Activated CD8-positive, alpha-beta T cell treated with anti-CD3 and anti-CD28 coated beads for 36 hours (primary cell): ENCODE measurements at regions of chr5 and their contacts with region 1.

Region 1: DNA sequence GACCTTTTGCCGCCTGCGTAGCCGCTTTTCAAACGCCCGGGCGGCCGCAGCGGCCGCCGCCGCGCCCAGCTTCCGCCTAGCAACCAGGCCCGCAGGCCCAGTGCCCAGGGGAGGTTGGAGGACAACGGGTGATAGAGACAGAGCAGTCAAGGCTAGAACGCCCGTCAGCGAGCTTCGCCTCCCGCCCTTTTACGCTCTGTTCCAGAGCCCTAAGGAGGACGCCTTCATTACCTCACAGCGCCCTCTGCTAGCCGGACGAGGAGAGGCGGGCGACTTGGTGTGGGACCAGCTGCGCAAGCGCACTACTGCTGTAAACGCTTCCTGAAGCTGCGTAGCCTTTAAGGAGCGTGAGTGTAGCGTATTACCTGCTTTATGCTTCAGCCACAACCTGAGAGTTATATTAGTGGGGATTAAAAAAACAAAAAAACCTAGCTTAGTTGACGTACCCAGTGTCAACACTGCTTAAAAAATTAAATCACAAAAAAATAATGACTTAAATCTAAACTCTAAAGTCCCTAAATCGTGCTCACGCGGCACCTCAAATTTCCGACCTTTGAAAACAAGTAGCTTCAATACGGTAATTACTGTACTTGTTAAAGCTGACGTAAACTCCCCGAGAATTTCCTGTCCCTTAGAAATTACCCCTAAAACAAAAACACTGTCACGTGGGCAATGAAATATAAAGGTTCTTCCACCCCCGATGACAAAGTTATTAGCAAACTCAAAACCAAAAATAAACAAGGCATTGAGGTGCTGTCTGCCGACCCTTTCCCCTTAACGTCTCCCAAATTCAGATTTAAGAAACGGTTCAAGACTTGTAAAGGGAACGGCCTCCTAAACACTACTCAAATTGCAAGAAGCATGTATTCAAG is at the start of gene CEP120:
- DNase-seq: peak; percentile 99
- ATAC-seq: peak; percentile 96
- H3K4me3 Mint-ChIP-seq: no peak within 1 kb of the TSS
- H3K27ac Mint-ChIP-seq: no peak within 1 kb of the TSS
- H3K4me1 Mint-ChIP-seq: peaks cover 15% of the 10 kb centered on the region
- H3K27me3 Mint-ChIP-seq: no peaks in the 10 kb centered on the region
- CTCF ChIP-seq: peak; percentile 67
- total RNA-seq, gene CEP120: 22.6 to 28.3 TPM

Region 2: DNA sequence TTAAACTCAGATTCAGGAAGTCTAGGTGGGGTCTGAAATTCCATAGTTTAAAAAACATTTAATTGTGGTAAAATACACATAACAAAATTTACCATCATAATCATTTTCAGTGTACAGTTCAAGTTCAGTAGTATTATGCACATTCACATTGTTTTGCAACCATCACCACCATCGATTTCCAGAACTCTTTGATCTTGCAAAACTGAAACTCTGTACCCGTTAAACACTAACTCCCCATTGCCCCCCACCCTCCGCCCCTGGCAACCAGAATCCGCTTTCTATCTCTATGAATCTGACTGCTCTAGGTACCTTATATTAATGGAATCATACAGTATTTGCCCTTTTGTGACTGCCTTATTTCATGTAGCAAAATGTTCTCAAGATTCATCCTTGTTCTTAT is 117.8 kb before region 1 on chr5:
- CTCF ChIA-PET with region 1: no interaction called
- POLR2A ChIA-PET with region 1: no interaction called
- intact Hi-C with region 1: no loop called
- DNase-seq: no peak
- ATAC-seq: no peak
- H3K4me3 Mint-ChIP-seq: no peak overlapping the region
- H3K27ac Mint-ChIP-seq: no peak overlapping the region
- H3K4me1 Mint-ChIP-seq: no peaks in the 10 kb centered on the region
- H3K27me3 Mint-ChIP-seq: no peaks in the 10 kb centered on the region
- CTCF ChIP-seq: no peak

Region 3: DNA sequence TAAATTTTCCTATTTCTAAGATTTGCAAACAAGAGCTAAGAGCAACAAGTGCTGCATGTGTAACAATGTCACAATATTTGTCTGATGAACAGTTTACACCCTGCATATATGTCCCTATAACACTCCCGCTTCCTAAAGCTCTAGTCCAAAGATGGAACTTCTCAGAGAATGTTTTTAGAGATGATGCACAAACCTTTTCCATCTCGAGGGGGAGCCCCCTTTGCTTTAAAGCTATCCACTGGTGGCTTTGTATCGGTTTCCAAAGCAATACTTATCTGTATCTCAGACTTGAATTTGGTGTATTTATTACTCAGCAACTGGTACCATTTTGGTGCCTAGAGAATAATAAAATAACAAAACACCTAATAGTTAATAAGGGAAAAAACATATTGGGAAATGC is 11.3 kb before region 1 on chr5:
- CTCF ChIA-PET with region 1: interaction called, 11 read pairs
- POLR2A ChIA-PET with region 1: interaction called, 7 read pairs
- intact Hi-C with region 1: no loop called
- DNase-seq: peak; percentile 17
- ATAC-seq: peak; percentile 45
- H3K4me3 Mint-ChIP-seq: no peak overlapping the region
- H3K27ac Mint-ChIP-seq: no peak overlapping the region
- H3K4me1 Mint-ChIP-seq: peaks cover 33% of the 10 kb centered on the region
- H3K27me3 Mint-ChIP-seq: no peaks in the 10 kb centered on the region
- CTCF ChIP-seq: no peak

Region 4: DNA sequence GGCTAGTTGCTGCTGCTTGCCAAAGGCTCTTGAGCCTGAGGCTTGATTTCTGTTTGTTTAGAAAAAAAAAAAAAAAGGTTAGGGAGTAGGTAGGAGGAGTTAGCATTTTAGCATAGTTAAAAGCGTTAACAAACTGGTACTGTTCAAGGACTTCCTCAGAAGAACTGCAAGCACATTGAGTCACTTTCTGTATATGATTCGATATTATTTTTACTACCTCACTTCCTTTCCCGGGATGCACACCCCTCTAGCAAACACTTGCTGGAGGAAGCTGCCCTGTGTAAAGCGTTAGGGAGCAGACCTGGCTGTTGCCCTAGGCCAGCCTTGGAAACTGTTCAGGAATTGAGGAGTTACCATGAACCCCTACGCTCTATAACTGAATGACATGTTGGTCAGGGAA is 15.4 kb after region 1 on chr5:
- CTCF ChIA-PET with region 1: interaction called, 21 read pairs
- POLR2A ChIA-PET with region 1: interaction called, 14 read pairs
- intact Hi-C with region 1: no loop called
- DNase-seq: peak; percentile 52
- ATAC-seq: peak; percentile 80
- H3K4me3 Mint-ChIP-seq: no peak overlapping the region
- H3K27ac Mint-ChIP-seq: peak overlapping the region; percentile 77
- H3K4me1 Mint-ChIP-seq: peaks cover 29% of the 10 kb centered on the region
- H3K27me3 Mint-ChIP-seq: no peaks in the 10 kb centered on the region
- CTCF ChIP-seq: no peak

Region 5: DNA sequence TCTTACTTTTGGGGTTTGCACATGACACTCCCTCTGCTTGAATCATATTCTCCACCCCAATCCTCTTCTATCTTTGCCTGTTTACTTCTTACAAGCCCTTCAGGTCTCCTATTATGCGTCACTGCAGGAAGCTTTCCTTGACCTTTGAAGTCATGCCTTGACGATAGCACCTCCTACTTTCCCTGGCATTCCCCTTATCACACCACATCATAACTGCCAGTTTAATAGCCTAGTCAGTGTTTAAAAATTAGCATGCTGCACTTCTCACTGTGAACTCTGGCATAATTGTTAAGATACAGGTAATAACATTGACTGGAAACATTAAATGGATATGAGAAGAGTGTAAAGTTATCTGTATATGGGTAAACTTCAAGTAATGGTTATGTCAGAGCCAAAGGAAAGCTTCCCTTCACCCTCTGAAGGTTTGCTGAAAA is 36.8 kb after region 1 on chr5:
- CTCF ChIA-PET with region 1: interaction called, 13 read pairs
- POLR2A ChIA-PET with region 1: interaction called, 12 read pairs
- intact Hi-C with region 1: no loop called
- DNase-seq: peak; percentile 72
- ATAC-seq: peak; percentile 95
- H3K4me3 Mint-ChIP-seq: peak overlapping the region; percentile 5
- H3K27ac Mint-ChIP-seq: peak overlapping the region; percentile 84
- H3K4me1 Mint-ChIP-seq: peaks cover 15% of the 10 kb centered on the region
- H3K27me3 Mint-ChIP-seq: no peaks in the 10 kb centered on the region
- CTCF ChIP-seq: no peak

Region 6: DNA sequence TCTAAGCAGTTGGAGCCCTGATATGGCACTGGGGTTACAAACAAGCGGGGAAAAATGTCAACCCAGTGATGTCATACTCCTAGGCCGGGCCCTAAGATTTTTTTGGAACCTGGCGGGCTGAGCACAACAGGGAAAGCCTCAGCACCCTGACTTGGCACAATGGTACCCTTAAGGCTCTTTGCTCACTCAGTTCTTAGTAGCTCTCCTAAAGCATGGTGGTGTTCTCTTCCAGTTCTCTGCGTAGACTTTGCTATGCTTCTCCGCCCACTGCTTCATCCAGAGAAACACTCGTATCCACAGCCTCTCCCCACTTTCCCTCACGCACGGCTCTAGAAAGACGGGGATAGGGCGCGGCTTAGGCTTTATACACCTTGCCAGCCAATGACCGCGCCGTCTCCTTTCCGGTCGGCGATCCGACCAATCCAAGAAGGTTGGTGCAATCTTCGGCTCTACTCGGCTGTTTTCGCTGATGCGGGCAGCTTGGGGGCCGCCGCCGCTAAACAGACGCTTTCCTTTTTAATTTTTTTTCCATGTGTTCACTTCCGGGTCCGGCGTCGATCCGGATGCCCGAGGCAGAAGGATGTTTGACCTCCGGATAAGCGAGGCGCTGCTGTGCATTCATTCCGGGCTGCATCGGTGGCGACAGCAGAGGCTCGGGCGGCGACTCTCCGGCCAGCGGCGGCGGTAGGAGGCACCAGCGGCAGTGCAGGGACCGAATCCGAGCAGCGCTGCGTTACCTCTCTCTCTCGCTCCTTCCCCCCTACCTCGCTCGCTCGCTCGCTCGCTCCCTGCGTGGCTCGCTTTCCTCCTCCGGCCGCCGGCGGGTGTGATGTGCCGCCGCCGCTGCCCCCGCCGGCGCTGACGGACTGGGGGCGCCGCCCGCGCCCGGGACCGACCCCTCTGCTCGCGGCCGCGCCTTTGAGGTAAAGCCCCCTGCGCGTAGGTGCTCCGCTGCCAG is 88.4 kb after region 1 on chr5 and contains the start of gene CSNK1G3:
- CTCF ChIA-PET with region 1: interaction called, 11 read pairs
- POLR2A ChIA-PET with region 1: interaction called, 64 read pairs
- intact Hi-C with region 1: loop called (anchors 5 kb)
- DNase-seq: peak; percentile 97
- ATAC-seq: peak; percentile 92
- H3K4me3 Mint-ChIP-seq: peak within 1 kb of the TSS; percentile 92
- H3K27ac Mint-ChIP-seq: peak within 1 kb of the TSS; percentile 98
- H3K4me1 Mint-ChIP-seq: peaks cover 46% of the 10 kb centered on the region
- H3K27me3 Mint-ChIP-seq: peaks cover 1% of the 10 kb centered on the region
- CTCF ChIP-seq: no peak
- total RNA-seq, gene CSNK1G3: 36.1 to 39.2 TPM

Region 7: DNA sequence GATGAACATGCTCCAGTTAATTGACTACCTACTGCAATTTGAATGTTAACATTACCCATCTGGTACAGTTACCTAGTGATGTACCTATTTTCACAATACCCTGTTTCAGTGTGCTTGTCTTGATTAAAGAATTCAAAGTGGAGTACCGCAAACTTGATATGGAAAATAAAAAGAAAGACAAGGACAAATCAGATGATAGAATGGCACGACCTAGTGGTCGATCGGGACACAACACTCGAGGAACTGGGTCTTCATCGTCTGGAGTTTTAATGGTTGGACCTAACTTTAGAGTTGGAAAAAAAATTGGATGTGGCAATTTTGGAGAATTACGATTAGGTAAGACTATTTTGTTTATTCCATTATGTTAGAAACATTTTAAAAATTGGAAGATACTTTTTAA is 122.0 kb after region 1 on chr5:
- CTCF ChIA-PET with region 1: interaction called, 24 read pairs
- POLR2A ChIA-PET with region 1: interaction called, 5 read pairs
- intact Hi-C with region 1: loop called (anchors 5 kb)
- DNase-seq: peak; percentile 42
- ATAC-seq: no peak
- H3K4me3 Mint-ChIP-seq: no peak overlapping the region
- H3K27ac Mint-ChIP-seq: no peak overlapping the region
- H3K4me1 Mint-ChIP-seq: peaks cover 67% of the 10 kb centered on the region
- H3K27me3 Mint-ChIP-seq: no peaks in the 10 kb centered on the region
- CTCF ChIP-seq: peak; percentile 77